Prostate gland (tissue), 2 donors: ENCODE measurements at regions of chr6 and their contacts with region 1.

Region 1: DNA sequence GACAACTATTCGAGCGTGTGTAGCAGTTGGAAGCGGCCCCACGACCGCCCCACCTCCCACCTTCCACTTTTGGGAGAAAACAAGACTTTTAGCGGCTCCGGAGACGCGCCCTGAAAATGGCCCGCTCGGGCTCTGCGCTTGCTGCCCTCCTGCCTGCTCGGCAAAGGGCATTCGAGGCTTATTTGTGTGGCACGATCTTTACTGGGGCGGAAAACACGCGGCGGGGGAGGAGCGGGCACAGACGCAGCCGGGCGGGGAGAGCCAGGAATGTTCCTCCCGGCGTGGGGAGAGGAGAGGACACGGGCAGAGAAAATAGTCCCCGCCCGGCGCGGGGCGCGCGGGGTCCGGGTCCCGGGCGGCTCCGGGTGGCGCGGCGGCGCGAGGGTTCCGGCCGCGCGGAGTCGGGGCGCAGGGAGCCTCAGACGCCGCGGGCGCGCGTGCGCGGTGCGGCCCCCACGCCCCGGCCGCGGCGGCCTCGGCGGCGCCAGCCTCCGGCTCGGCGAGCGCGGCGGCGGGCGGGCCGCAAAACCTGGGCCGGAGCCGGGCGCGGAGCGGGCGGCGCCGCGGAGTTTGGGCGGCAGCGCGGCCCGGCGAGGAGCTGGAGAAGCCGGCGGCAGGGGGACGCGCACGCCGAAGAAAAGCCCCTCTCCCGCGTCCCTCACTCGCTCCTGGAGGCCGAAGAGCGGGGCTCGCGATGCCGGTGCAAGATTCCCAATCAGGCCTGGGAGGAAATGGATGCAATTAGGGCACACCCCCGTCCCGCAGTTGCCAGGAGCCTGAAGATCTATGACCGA is 90.0 kb upstream of the ARID1B start:
- DNase-seq: peak; percentile 92
- H3K4me3 ChIP-seq: peak overlapping the region; percentile 56 to 59
- H3K27ac ChIP-seq: peak overlapping the region; percentile 98
- H3K4me1 ChIP-seq: no peaks in the 10 kb centered on the region
- H3K27me3 ChIP-seq: no peaks in the 10 kb centered on the region
- CTCF ChIP-seq: no peak
- POLR2A ChIP-seq: peak; percentile 74

Region 2: DNA sequence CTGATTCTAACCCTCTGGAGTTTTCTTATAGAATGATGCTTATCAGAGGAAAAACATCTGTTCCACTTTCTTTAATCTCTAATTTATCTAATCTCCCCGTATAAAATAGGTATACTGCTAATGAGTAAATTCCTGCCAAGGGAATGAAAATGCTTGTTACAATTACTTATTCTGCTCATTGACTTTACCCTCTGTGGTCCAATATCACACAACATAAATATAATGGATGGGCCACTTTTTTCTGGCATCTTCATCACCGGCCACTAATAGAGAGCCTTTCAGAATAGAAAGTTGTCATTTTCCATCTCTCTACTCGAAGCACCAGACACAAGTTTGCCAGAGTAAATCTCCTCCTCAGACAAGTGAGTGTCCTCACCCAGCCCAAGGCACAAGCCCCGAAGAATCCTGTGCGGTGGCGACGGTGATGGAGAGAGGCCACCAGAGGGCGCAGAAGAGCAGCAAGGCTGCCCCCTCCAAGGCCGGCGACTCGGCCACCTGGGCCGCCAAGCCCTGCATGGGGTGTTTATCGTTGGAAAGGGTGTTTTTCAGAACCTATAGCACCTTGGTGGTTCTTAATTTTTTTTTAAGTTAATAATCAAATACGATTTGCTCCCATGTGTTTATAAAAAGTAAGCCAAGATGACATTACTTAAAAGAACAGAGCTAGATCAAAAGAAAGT is 122.9 kb before region 1 on chr6:
- intact Hi-C with region 1: loop called (anchors 2 kb)
- DNase-seq: peak; percentile 78
- H3K4me3 ChIP-seq: no peak overlapping the region
- H3K27ac ChIP-seq: no peak overlapping the region
- H3K4me1 ChIP-seq: no peaks in the 10 kb centered on the region
- H3K27me3 ChIP-seq: no peaks in the 10 kb centered on the region
- CTCF ChIP-seq: peak; percentile 87 to 93 (median 90)
- POLR2A ChIP-seq: no peak

Region 3: GRCh38 chr6:156719720-156720563 is 32.8 kb after region 1 on chr6:
- intact Hi-C with region 1: loop called (anchors 5 kb)
- DNase-seq: peak; percentile 97
- H3K4me3 ChIP-seq: peak overlapping the region; percentile 6 to 12
- H3K27ac ChIP-seq: peak overlapping the region; percentile 90 to 95
- H3K4me1 ChIP-seq: peaks cover 15% of the 10 kb centered on the region
- H3K27me3 ChIP-seq: no peaks in the 10 kb centered on the region
- CTCF ChIP-seq: peak in 1 of 4 experiments; percentile 22
- POLR2A ChIP-seq: peak; percentile 60

Region 4: DNA sequence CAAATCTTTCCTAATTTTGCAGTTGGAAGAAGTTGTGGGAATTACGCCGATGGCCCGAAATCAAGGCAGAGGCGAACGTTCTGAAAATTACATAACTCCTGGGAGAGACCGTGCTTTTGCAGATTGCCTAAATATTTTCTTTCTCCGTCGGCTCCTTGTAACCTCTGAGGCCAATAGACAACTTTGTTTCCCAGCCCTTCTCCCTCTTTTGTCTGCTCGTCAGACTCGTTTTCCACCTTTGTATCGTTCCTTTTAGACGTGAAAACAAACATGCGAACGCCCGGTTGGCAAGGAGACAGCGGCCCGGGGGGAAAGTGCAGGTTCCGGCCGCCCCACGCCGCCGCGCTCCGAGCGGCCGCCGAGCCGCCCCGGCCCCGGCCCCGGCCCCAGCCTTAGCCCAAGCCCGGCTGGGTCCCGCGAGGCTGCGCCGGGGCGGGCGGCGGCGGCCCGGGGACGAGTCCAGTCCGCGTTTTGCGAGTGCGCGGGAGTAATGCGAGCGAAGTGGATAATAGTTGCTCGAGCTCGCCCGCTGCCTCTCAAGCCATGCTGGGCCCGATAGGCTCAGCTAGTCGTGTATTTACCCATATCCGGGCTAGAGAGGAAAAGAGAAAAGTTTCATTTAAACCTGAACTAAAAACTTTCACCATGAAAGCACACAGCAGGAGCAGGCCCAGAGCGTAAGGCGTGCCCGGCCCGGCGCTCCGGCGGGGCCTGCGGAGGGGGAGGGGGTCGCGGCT is 89.8 kb after region 1 on chr6 and contains the start of gene ARID1B:
- intact Hi-C with region 1: loop called (anchors 2 kb)
- DNase-seq: peak; percentile 73
- H3K4me3 ChIP-seq: peak within 1 kb of the TSS; percentile 82 to 89
- H3K27ac ChIP-seq: peak within 1 kb of the TSS; percentile 98 to 100
- H3K4me1 ChIP-seq: no peaks in the 10 kb centered on the region
- H3K27me3 ChIP-seq: no peaks in the 10 kb centered on the region
- CTCF ChIP-seq: no peak
- POLR2A ChIP-seq: peak; percentile 40
- total RNA-seq, gene ARID1B: 65.1 to 99.4 TPM

Region 5: GRCh38 chr6:156953479-156954146 is 266.4 kb after region 1 on chr6:
- intact Hi-C with region 1: loop called (anchors 2 kb)
- DNase-seq: no peak
- H3K4me3 ChIP-seq: no peak overlapping the region
- H3K27ac ChIP-seq: no peak overlapping the region
- H3K4me1 ChIP-seq: peaks cover 21% of the 10 kb centered on the region
- H3K27me3 ChIP-seq: no peaks in the 10 kb centered on the region
- CTCF ChIP-seq: peak in 2 of 4 experiments; percentile 56 to 59
- POLR2A ChIP-seq: no peak

Region 6: DNA sequence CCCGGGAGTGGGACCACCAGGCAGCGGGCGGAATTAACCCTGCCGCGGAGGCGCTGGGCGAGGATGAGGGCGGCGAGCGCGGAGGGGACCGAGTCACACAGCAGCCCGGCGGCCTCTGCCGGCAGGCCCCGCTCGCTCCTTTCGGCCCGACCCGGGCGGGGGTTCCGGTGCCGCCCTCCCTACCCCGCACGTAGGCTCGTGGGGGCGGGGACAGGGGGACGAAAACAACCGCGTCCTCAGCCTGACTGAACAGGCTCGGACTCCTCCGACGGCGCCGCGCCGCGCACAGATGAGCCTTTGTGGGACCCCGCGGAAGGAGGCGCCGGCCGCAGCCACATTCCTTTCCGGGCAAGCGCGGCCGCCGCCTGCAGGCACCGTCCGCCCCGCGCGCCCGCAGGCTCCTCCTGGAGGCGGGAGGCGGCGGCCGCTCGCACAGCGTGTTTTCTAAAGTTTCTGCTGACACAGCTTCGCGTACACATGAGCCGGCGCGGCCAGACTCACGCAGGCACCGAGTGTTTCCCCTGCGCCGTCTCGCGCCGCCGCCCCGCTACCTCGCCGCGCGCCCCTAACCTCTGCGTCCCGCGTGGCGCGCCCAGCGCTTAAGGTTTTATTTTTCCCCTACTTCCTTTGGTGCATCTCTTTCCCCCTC is 334.3 kb after region 1 on chr6:
- intact Hi-C with region 1: loop called (anchors 5 kb)
- DNase-seq: peak; percentile 92
- H3K4me3 ChIP-seq: peak overlapping the region; percentile 80 to 84
- H3K27ac ChIP-seq: peak overlapping the region; percentile 99
- H3K4me1 ChIP-seq: peaks cover 4% of the 10 kb centered on the region
- H3K27me3 ChIP-seq: no peaks in the 10 kb centered on the region
- CTCF ChIP-seq: peak in 3 of 4 experiments; percentile 34 to 46 (median 44)
- POLR2A ChIP-seq: peak; percentile 98

Region 7: DNA sequence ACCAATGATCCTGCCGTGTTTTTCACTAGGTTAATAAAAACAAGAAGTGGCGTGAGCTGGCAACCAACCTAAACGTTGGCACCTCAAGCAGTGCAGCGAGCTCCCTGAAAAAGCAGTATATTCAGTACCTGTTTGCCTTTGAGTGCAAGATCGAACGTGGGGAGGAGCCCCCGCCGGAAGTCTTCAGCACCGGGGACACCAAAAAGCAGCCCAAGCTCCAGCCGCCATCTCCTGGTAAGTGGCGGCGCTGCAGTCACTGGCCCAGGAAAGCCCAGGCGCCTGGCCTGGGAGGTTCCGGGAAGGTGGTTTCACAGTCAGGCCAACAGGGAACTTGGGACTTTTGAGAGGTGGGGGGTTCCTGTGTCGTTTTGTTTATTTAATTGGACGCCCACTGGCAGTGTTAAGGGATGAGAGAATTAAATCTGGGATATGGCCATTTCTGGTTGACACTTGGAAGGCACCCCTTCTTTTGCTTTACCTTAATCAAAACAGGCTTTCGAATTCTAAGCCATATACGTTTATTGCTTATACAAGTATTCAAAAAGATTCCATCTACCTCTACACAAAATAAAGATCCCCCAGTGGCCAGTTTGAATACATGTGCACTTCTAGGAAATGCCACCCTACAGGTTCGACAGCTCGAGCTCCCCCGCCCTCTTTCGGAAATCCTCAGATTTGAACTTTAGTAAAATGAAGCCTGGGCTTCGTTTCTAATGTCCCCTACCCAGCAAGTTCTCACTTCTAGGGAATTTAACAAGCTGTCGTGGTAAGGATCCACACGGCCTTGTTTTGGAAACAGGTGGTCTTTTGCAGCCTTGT is 497.2 kb after region 1 on chr6:
- intact Hi-C with region 1: loop called (anchors 2 kb)
- DNase-seq: peak; percentile 82
- H3K4me3 ChIP-seq: no peak overlapping the region
- H3K27ac ChIP-seq: peak overlapping the region; percentile 69 to 70
- H3K4me1 ChIP-seq: no peaks in the 10 kb centered on the region
- H3K27me3 ChIP-seq: no peaks in the 10 kb centered on the region
- CTCF ChIP-seq: peak; percentile 81 to 96 (median 92)
- POLR2A ChIP-seq: no peak

Region 8: GRCh38 chr6:157203312-157203744 is 516.1 kb after region 1 on chr6:
- intact Hi-C with region 1: no loop called
- DNase-seq: no peak
- H3K4me3 ChIP-seq: no peak overlapping the region
- H3K27ac ChIP-seq: no peak overlapping the region
- H3K4me1 ChIP-seq: no peaks in the 10 kb centered on the region
- H3K27me3 ChIP-seq: no peaks in the 10 kb centered on the region
- CTCF ChIP-seq: no peak
- POLR2A ChIP-seq: no peak